ENCODE measurements at regions of chr12 and their contacts with region 1.

Region 1: DNA sequence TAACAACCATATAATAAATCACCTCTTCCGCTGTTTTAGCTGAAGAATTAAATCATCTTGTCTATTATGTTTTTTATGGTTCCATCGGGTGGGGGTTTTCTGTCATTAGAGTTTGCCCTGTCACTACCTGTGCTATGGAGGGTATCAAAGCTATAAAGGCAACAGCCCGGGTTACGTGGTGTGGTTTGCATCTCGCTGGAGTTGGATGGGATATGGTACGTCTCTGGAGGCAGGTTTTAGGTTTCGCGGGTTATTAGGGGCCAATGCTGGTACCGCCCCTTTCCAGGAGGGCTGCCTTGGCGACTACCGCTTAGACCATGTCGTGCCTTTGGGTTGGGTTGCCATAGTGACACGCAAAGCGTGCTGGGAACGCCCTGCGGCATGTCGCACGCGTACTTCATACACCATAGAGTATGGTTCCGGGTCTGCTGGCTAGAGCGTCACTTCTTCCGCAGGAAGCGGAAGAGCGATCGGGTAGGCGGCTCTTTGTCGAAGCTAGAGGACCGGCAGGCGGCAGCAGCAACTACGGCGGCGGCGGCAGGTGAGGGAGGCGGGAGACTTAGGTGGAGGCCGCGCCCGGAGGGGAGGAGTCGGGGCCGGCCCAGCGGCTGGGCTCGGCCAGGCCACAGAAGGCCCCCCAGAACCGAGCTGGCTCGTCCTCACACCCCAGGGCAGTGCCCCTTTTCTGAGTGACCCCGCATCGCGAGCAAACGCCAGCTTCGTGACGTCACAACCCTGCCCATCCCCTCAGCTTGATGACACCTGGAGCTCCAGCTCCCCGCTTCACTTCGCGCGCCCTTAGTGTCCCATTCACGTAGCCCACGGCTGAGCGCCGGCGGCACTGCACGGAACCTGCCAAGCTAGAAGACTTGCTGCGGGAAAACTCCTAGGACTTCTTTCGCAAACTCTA is at the start of gene ZC3H10:
- DNase-seq: peak; percentile 99
- H3K4me3 Mint-ChIP-seq: peak within 1 kb of the TSS; percentile 97
- H3K27ac Mint-ChIP-seq: peak within 1 kb of the TSS; percentile 100
- H3K4me1 Mint-ChIP-seq: peaks cover 35% of the 10 kb centered on the region
- H3K27me3 Mint-ChIP-seq: peaks cover 3% of the 10 kb centered on the region
- total RNA-seq, gene ZC3H10: 8.9 and 11.2 TPM in 2 replicates

Region 2: GRCh38 chr12:55789171-55789570 is 328.9 kb before region 1 on chr12:
- intact Hi-C with region 1: no loop called
- DNase-seq: no peak
- H3K4me3 Mint-ChIP-seq: no peak overlapping the region
- H3K27ac Mint-ChIP-seq: no peak overlapping the region
- H3K4me1 Mint-ChIP-seq: peaks cover 2% of the 10 kb centered on the region
- H3K27me3 Mint-ChIP-seq: no peaks in the 10 kb centered on the region

Region 3: DNA sequence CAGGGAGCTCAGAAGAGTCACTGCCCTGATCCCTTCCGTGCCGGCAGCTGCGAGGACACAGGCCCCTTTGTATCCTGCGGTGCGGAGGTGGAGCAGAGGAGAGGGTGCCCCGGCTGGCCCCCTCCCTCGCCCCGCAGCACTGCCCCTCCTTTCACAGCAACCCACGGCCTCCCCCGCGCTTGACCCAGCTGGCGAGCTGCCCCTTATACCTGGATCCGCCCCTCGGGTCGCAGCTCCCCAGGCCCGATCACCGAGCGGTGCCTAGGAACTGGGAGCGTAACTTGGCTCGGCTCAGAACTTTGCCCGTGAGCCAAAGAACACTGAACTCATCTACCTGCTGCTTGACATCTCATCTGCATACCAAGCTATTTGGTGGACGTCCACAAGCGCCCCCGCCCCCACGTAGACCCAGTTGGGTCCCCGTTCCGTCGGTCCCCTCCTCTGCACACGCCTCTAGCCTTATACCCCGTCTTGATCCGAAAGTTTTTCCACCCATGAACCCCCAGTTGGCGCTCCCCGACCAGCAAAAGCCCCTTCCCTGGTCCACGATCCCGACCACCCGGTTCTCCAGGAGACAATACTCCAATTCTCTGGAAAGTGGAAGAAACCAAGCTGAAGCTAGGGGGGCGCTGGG is 287.9 kb before region 1 on chr12:
- intact Hi-C with region 1: loop called (anchors 5 kb)
- DNase-seq: peak; percentile 81
- H3K4me3 Mint-ChIP-seq: peak overlapping the region; percentile 98
- H3K27ac Mint-ChIP-seq: peak overlapping the region; percentile 93
- H3K4me1 Mint-ChIP-seq: peaks cover 47% of the 10 kb centered on the region
- H3K27me3 Mint-ChIP-seq: no peaks in the 10 kb centered on the region

Region 4: DNA sequence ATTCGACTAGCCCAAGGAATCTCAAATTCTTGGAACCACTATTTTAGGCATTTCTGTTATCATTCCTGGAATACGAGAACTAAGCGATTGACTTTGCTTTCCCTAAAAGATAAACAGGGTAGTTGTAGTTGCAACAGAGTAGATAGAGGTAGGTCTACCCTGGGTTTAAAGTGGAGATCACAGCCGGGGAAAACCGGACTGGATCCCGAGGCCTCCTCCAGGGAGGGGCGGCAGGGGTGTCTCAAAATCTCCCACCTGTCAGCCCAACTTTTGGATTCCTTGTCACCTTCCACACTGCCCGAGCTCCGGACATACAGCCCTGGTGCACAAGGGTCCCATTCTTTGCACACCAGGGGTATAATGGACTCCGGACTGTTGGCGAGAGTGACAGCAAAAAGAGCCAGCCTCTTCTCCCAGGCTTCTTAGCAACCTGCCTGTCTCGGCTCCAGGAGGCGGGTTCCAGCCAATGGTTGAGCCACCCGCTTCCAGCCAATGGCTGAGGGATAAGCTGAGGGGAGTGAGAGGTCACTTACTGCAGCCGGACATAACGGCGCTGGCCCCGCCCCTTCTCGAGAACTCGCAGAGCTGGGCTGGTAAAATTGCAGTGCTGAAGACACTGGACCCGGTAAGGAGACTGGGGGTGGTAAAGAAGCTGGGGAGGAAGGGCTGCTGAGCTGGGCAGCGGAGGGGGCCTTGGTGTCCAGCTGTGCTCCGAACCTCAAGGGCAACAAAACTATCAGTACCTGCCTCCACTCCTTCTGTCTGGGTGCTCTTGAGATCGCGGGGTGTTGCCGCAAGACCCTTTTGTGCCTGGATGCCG is 121.1 kb before region 1 on chr12 and contains the start of gene SUOX:
- intact Hi-C with region 1: loop called (anchors 2 kb)
- DNase-seq: peak; percentile 86
- H3K4me3 Mint-ChIP-seq: peak within 1 kb of the TSS; percentile 87
- H3K27ac Mint-ChIP-seq: peak within 1 kb of the TSS; percentile 53
- H3K4me1 Mint-ChIP-seq: peaks cover 28% of the 10 kb centered on the region
- H3K27me3 Mint-ChIP-seq: no peaks in the 10 kb centered on the region
- total RNA-seq, gene SUOX: 9.3 and 10.2 TPM in 2 replicates

Region 5: DNA sequence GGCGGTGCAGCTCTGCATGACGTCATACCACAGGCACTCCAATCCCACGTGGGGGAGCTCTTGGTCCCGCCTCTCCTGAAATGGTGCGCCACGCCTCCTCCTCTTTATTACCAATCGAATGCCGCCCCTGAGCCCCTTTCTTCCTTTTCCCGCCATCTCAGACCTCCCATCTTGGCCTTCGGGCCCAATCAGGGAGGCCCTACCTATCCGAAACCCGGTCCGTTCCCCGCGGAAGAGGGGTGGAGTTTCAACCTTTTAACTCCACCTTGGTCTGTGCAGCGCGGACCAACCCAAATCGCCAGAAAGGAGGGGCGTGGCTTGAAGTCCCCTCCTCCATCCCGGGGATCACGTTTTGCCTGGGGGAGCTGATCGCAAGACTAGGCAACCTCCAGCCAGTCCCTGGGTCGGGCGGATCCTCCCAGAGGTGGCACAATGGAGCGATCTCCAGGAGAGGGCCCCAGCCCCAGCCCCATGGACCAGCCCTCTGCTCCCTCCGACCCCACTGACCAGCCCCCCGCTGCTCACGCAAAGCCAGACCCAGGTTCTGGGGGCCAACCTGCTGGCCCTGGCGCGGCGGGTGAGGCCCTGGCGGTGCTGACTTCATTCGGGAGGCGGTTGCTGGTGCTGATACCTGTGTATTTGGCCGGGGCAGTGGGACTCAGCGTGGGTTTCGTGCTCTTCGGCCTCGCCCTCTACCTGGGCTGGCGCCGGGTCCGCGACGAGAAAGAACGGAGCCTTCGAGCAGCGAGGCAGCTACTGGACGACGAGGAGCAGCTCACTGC is 10.0 kb after region 1 on chr12 and contains the start of gene ESYT1:
- intact Hi-C with region 1: loop called (anchors 1 kb)
- DNase-seq: peak; percentile 99
- H3K4me3 Mint-ChIP-seq: peak within 1 kb of the TSS; percentile 98
- H3K27ac Mint-ChIP-seq: peak within 1 kb of the TSS; percentile 94
- H3K4me1 Mint-ChIP-seq: peaks cover 65% of the 10 kb centered on the region
- H3K27me3 Mint-ChIP-seq: no peaks in the 10 kb centered on the region
- total RNA-seq, gene ESYT1: 155 and 158 TPM in 2 replicates

Region 6: GRCh38 chr12:56189176-56189917 is 71.3 kb after region 1 on chr12 and contains the start of gene SMARCC2:
- intact Hi-C with region 1: loop called (anchors 1 kb)
- DNase-seq: peak; percentile 96
- H3K4me3 Mint-ChIP-seq: peak within 1 kb of the TSS; percentile 97
- H3K27ac Mint-ChIP-seq: peak within 1 kb of the TSS; percentile 95
- H3K4me1 Mint-ChIP-seq: peaks cover 42% of the 10 kb centered on the region
- H3K27me3 Mint-ChIP-seq: no peaks in the 10 kb centered on the region
- total RNA-seq, gene SMARCC2: 127 and 130 TPM in 2 replicates

Region 7: DNA sequence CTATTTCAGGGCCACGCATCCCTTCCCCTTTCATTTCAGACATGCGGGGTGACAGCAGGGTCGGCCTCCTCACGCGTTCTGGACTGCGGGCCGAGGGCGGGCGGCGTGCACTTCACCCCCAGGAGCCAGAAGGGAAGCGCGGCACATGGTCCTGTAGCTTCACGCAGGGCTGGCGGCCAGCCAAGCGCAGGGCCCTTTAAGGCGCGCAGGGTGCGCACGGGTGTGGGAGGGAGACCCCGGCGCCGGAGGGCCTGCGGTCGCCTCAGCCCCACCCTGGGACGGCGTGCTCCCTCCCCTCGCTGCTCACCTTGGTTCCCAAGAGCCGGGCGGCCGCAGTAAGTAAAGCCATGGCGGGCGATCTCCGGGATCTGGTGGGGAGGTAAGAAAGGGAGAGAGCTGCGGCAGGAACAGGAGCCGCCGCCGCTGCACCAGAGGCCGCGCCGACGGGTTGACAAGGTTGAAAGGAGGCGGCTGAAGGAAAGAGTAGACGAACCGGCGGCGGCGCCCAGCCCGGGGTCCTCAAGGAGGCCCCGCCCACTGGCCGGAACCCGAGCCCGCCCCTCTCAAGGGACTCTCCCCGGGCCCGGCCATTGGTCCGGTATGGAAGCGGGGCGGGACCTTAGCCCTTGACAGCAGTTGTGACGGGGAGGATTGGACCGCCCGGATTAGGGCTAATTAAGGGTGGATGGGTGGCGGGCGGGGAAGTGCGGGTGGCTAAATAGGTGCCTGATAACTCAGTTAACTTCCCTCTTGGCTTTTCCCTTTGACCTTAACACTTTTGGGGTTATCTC is 182.0 kb after region 1 on chr12 and contains the start of gene CS:
- intact Hi-C with region 1: loop called (anchors 2 kb)
- DNase-seq: peak; percentile 99
- H3K4me3 Mint-ChIP-seq: peak within 1 kb of the TSS; percentile 99
- H3K27ac Mint-ChIP-seq: peak within 1 kb of the TSS; percentile 97
- H3K4me1 Mint-ChIP-seq: peaks cover 39% of the 10 kb centered on the region
- H3K27me3 Mint-ChIP-seq: no peaks in the 10 kb centered on the region
- total RNA-seq, gene CS: 311 and 317 TPM in 2 replicates

Region 8: GRCh38 chr12:56636675-56637540 is 518.9 kb after region 1 on chr12:
- intact Hi-C with region 1: loop called (anchors 5 kb)
- DNase-seq: peak; percentile 96
- H3K4me3 Mint-ChIP-seq: peak overlapping the region; percentile 99
- H3K27ac Mint-ChIP-seq: peak overlapping the region; percentile 93
- H3K4me1 Mint-ChIP-seq: peaks cover 60% of the 10 kb centered on the region
- H3K27me3 Mint-ChIP-seq: no peaks in the 10 kb centered on the region

Measured in activated CD4-positive, alpha-beta T cell treated with anti-CD3 and anti-CD28 coated beads, Interleukin-2, amount 10 ng/mL, durations not matched to agents 24 days and 14 days (primary cell).